ENCODE measurements at regions of chr20 and their contacts with region 1.

Region 1: DNA sequence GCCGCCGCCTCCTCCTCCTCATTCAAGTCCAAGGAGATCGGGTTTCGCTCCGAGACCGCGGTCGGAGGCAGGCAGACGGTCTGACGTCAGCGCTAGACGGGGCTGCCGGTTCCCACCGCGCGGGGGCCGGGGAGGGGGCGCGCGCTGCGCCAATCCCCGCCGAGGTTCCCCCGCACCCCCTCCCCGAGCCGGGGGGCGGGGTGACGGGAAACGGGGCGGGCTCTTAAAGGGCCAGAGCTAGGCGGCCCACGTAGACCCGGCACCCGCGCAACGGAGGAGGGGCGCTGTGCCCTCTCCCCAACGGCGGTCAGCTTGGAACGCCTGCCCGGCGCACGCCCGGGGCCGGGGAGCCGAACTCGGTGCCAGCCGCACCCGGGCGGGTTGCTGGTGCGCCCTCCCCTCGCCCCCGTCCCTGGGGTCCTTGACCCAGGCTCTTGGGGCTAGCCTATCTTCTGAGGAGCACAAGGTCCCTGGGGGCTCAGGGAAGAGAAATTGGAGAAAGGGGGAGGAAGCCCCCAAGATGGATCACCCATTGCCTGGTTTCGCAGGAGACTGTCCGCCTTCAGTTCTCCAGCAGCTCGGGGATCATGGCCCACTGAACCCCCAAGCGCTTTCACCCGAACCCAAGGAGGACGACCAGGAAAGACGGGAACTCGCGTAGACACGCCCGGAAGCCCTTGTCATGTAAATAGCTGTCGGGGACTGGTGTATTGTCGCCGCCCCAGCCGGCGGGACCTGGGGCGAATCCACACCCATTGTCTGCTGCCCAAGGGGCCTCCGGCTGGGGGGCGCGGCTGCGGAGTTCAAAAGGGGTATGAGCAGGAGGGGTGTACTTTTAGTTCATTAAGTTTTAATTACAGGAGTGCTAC is at the start of gene PMEPA1:
- DNase-seq: peak; percentile 95 to 98
- H3K4me3 ChIP-seq: peak within 1 kb of the TSS; percentile 59
- H3K4me3 Mint-ChIP-seq: peak within 1 kb of the TSS; percentile 70
- H3K27ac Mint-ChIP-seq: peak within 1 kb of the TSS; percentile 3
- H3K4me1 ChIP-seq: peaks cover 4% of the 10 kb centered on the region; the same call in 1 of the 2 replicates
- H3K4me1 Mint-ChIP-seq: peaks cover 8% of the 10 kb centered on the region
- H3K27me3 ChIP-seq: peaks cover 2% of the 10 kb centered on the region
- H3K27me3 Mint-ChIP-seq: peaks cover 20% of the 10 kb centered on the region
- CTCF ChIP-seq: no peak
- total RNA-seq, gene PMEPA1: 3.3 and 3.7 TPM in 2 replicates

Region 2: DNA sequence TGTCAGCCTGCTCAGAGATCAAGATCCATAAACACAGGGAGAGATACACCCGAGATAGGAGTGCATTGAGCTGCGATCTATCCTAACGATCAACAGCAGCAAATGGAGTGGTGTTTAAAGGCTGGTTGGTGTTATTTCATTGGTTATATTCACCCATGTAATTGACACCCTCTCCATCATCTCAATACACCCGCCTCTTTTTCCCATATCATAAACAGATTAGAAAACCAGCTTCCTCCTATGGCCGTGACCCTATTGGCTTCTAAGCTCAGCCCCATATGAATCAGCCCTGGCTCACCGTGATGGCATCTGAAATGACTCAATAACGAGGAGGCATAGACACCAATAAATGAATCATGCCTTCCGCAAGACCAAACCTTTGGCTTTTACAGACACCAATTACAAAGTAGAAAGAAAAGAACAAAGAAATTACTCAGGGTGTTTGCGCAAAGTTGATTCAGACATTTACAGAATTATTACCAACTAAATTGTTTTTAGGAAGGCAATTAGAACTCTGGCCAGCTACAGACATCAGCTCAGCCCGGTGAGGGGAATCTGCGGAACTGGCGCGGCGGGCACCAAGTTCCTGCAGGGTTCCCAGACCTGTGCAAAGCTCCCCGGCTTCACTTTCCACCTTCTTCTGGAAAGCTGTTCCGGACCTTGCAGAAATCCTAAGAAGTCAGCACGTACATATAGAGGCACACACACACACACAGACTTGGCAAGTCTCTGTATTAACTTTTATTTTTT is 11.9 kb before region 1 on chr20:
- CTCF ChIA-PET with region 1: interaction called, 21 read pairs
- POLR2A ChIA-PET with region 1: interaction called, 4 read pairs
- intact Hi-C with region 1: loop called (anchors 1 kb)
- DNase-seq: peak; percentile 73 to 85
- H3K4me3 ChIP-seq: no peak overlapping the region
- H3K4me3 Mint-ChIP-seq: peak overlapping the region; percentile 45
- H3K27ac Mint-ChIP-seq: peak overlapping the region; percentile 49
- H3K4me1 ChIP-seq: peaks cover 32% of the 10 kb centered on the region
- H3K4me1 Mint-ChIP-seq: peaks cover 32% of the 10 kb centered on the region
- H3K27me3 ChIP-seq: no peaks in the 10 kb centered on the region; the same call in none of the 2 replicates
- H3K27me3 Mint-ChIP-seq: peaks cover 2% of the 10 kb centered on the region
- CTCF ChIP-seq: no peak

Region 3: GRCh38 chr20:57893366-57893999 is 183.3 kb after region 1 on chr20:
- CTCF ChIA-PET with region 1: no interaction called
- POLR2A ChIA-PET with region 1: no interaction called
- intact Hi-C with region 1: no loop called
- DNase-seq: no peak
- H3K4me3 ChIP-seq: no peak overlapping the region
- H3K4me3 Mint-ChIP-seq: no peak overlapping the region
- H3K27ac Mint-ChIP-seq: no peak overlapping the region
- H3K4me1 ChIP-seq: no peaks in the 10 kb centered on the region
- H3K4me1 Mint-ChIP-seq: no peaks in the 10 kb centered on the region
- H3K27me3 ChIP-seq: no peaks in the 10 kb centered on the region; the same call in 1 of the 2 replicates
- H3K27me3 Mint-ChIP-seq: peaks cover 21% of the 10 kb centered on the region
- CTCF ChIP-seq: no peak